B cell (primary cell): ENCODE measurements at regions of chr19 and their contacts with region 1.

Region 1: DNA sequence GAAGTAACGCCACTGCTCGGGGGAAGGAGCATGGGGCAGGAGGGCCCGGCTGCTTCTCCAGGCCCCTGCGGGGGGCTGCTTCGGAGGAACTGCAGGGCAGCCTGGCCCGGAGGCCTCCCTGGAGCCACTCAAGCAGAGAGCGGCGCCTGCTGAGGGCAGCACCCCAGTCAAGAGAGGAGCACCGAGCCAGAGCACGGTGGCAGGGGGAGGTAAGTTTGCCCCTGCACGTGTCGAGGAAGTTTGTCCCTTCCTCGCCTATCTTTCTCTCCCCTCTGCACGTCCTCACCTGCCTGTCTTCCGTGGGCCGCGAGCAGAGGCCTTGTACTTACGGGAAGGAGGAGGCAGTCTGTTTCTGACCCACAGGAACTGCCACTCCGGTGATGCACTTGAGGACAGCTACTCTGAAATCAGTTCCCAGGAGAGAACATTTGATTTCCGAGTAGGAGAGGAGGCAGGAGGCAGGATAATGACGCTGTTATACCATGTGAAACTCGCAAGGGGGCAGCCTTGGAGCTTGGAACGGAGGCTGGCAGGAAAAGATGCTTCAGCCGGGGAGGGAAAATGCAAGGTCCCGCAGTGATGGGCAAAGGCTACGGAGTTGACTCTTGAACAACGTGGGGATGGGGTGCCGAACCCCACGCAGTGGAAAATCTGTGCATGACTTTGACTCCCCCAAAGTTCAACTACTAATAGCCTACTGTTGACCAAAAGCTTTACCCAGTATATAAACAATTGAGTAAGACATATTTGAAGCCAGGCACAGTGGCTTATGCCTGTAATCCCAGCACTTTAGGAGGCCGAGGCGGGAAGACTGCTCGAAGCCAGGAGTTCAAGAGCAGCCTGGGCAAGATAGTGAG is 5.0 kb downstream of the FFAR1 start:
- DNase-seq: peak; percentile 86
- ATAC-seq: peak; percentile 66
- H3K4me3 ChIP-seq: no peak overlapping the region
- H3K4me3 Mint-ChIP-seq: no peak overlapping the region
- H3K27ac ChIP-seq: no peak overlapping the region
- H3K27ac Mint-ChIP-seq: peak overlapping the region; percentile 39
- H3K4me1 ChIP-seq: peaks cover 31 to 44% of the 10 kb centered on the region in 2 donors
- H3K4me1 Mint-ChIP-seq: peaks cover 35% of the 10 kb centered on the region
- H3K27me3 ChIP-seq: no peaks in the 10 kb centered on the region
- H3K27me3 Mint-ChIP-seq: peaks cover 9% of the 10 kb centered on the region
- CTCF ChIP-seq: peak; percentile 82

Region 2: GRCh38 chr19:35269421-35270117 is 83.1 kb before region 1 on chr19:
- CTCF ChIA-PET with region 1: interaction called, 11 read pairs
- POLR2A ChIA-PET with region 1: interaction called, 4 read pairs
- intact Hi-C with region 1: loop called (anchors 1 kb)
- DNase-seq: peak; percentile 92
- ATAC-seq: peak; percentile 71
- H3K4me3 ChIP-seq: peak overlapping the region in 4 of 5 experiments; percentile 24 to 62 (median 54)
- H3K4me3 Mint-ChIP-seq: peak overlapping the region; percentile 84
- H3K27ac ChIP-seq: no peak overlapping the region
- H3K27ac Mint-ChIP-seq: peak overlapping the region; percentile 87
- H3K4me1 ChIP-seq: peaks cover 39 to 57% of the 10 kb centered on the region in 2 donors
- H3K4me1 Mint-ChIP-seq: peaks cover 62% of the 10 kb centered on the region
- H3K27me3 ChIP-seq: no peaks in the 10 kb centered on the region
- H3K27me3 Mint-ChIP-seq: no peaks in the 10 kb centered on the region
- CTCF ChIP-seq: peak; percentile 77

Region 3: GRCh38 chr19:35306473-35307246 is 46.0 kb before region 1 on chr19:
- CTCF ChIA-PET with region 1: interaction called, 14 read pairs
- POLR2A ChIA-PET with region 1: interaction called, 4 read pairs
- intact Hi-C with region 1: loop called (anchors 2 kb)
- DNase-seq: peak; percentile 58
- ATAC-seq: peak; percentile 62
- H3K4me3 ChIP-seq: no peak overlapping the region
- H3K4me3 Mint-ChIP-seq: peak overlapping the region; percentile 29
- H3K27ac ChIP-seq: no peak overlapping the region
- H3K27ac Mint-ChIP-seq: peak overlapping the region; percentile 65
- H3K4me1 ChIP-seq: peaks cover 21 to 42% of the 10 kb centered on the region in 2 donors
- H3K4me1 Mint-ChIP-seq: peaks cover 45% of the 10 kb centered on the region
- H3K27me3 ChIP-seq: no peaks in the 10 kb centered on the region
- H3K27me3 Mint-ChIP-seq: no peaks in the 10 kb centered on the region
- CTCF ChIP-seq: peak; percentile 33

Region 4: DNA sequence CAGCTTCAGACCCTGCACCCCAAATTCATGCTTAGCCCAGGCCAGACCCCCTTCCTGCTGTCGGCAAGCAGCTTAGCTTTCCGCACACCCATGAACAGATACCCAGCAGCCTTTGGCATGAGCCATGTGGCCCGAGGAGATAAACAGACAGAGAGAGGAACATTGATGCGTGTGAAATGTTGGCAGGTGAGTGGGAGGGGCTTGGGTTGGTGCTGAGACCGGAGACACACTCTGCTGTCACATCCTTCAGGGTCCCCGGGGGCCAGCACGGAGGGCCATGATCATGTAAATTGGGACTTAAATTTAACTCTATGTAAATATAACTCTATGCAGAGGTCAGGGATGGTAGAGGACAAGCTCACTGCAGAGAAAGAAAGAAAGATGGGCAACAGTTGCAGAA is 22.2 kb before region 1 on chr19:
- CTCF ChIA-PET with region 1: interaction called, 24 read pairs
- POLR2A ChIA-PET with region 1: interaction called, 12 read pairs
- intact Hi-C with region 1: loop called (anchors 1 kb)
- DNase-seq: peak; percentile 94
- ATAC-seq: peak; percentile 84
- H3K4me3 ChIP-seq: peak overlapping the region; percentile 83 to 100 (median 89)
- H3K4me3 Mint-ChIP-seq: peak overlapping the region; percentile 93
- H3K27ac ChIP-seq: peak overlapping the region; percentile 79 to 90
- H3K27ac Mint-ChIP-seq: peak overlapping the region; percentile 96
- H3K4me1 ChIP-seq: peaks cover 68 to 83% of the 10 kb centered on the region in 2 donors
- H3K4me1 Mint-ChIP-seq: peaks cover 75% of the 10 kb centered on the region
- H3K27me3 ChIP-seq: no peaks in the 10 kb centered on the region
- H3K27me3 Mint-ChIP-seq: no peaks in the 10 kb centered on the region
- CTCF ChIP-seq: no peak

Region 5: DNA sequence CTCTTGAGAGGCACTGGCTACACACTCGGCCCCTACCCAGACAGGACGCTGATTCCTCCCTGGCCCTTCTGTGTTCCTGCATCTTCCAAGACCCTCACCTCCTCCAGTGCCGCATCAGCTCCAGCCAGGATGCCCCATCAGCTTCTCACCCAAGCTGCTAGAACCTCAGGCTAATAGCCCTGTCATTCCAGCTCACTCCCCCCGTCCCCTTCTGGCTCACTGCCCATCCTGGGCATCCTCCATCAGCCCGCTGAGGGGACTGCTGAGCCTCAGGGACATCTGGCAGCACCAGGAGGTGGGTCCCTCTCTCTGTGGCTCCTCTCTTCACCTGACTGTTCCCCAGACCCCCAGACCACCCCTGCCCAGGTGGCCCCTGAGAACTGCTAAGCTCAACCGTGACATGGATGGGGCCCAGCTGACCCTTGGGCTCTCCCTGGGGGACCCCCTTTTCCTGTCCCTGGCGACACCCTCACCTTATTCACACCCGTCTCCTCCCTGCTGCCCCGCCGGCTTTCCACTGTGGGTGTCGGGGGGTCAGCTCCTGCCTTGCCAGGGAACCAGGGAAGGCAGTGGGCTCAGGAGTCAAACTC is 10.4 kb after region 1 on chr19:
- CTCF ChIA-PET with region 1: no interaction called
- POLR2A ChIA-PET with region 1: no interaction called
- intact Hi-C with region 1: no loop called
- DNase-seq: no peak
- ATAC-seq: no peak
- H3K4me3 ChIP-seq: no peak overlapping the region
- H3K4me3 Mint-ChIP-seq: no peak overlapping the region
- H3K27ac ChIP-seq: no peak overlapping the region
- H3K27ac Mint-ChIP-seq: no peak overlapping the region
- H3K4me1 ChIP-seq: no peaks in the 10 kb centered on the region
- H3K4me1 Mint-ChIP-seq: peaks cover 1% of the 10 kb centered on the region
- H3K27me3 ChIP-seq: peaks cover 0 to 10% (median 0%) of the 10 kb centered on the region in 4 experiments
- H3K27me3 Mint-ChIP-seq: peaks cover 6% of the 10 kb centered on the region
- CTCF ChIP-seq: no peak

Region 6: DNA sequence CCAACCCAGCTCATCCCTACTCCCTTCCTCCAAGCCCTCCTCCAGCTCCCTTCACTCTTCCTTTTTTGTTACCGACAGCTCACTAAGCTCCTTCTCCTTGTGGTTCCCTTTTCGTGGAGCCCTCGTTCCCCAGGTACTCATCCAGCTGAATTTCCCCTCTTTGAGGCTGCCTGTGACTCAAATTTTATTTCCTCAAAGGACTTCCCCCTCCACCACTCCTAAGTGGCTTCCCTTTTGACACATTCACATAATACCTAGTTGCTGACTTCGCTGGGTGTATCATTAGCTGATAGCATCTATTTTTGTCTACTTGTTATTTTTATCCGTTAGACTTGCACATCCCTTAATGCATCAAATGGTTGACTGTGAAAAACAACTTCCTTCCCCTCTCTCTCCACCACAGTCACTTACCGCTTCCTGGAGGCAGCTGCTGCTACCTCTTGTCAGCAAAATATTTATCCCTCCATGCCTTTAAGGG is 109.8 kb after region 1 on chr19:
- CTCF ChIA-PET with region 1: interaction called, 234 read pairs
- POLR2A ChIA-PET with region 1: interaction called, 6 read pairs
- intact Hi-C with region 1: loop called (anchors 1 kb)
- DNase-seq: peak; percentile 88
- ATAC-seq: peak; percentile 78
- H3K4me3 ChIP-seq: peak overlapping the region in 3 of 5 experiments; percentile 1 to 24 (median 12)
- H3K4me3 Mint-ChIP-seq: peak overlapping the region; percentile 79
- H3K27ac ChIP-seq: peak overlapping the region; percentile 52 to 71
- H3K27ac Mint-ChIP-seq: peak overlapping the region; percentile 86
- H3K4me1 ChIP-seq: peaks cover 60 to 67% of the 10 kb centered on the region in 2 donors
- H3K4me1 Mint-ChIP-seq: peaks cover 62% of the 10 kb centered on the region
- H3K27me3 ChIP-seq: no peaks in the 10 kb centered on the region
- H3K27me3 Mint-ChIP-seq: no peaks in the 10 kb centered on the region
- CTCF ChIP-seq: no peak

Region 7: GRCh38 chr19:35495107-35496064 is 142.7 kb after region 1 on chr19:
- CTCF ChIA-PET with region 1: interaction called, 76 read pairs
- POLR2A ChIA-PET with region 1: interaction called, 3 read pairs
- intact Hi-C with region 1: loop called (anchors 1 kb)
- DNase-seq: peak; percentile 82
- ATAC-seq: peak; percentile 99
- H3K4me3 ChIP-seq: peak overlapping the region in 1 of 5 experiments; percentile 24
- H3K4me3 Mint-ChIP-seq: no peak overlapping the region
- H3K27ac ChIP-seq: no peak overlapping the region
- H3K27ac Mint-ChIP-seq: no peak overlapping the region
- H3K4me1 ChIP-seq: peaks cover 6 to 11% of the 10 kb centered on the region in 2 donors
- H3K4me1 Mint-ChIP-seq: peaks cover 8% of the 10 kb centered on the region
- H3K27me3 ChIP-seq: peaks cover 0 to 6% (median 2%) of the 10 kb centered on the region in 4 experiments
- H3K27me3 Mint-ChIP-seq: peaks cover 9% of the 10 kb centered on the region
- CTCF ChIP-seq: peak; percentile 100

Region 8: DNA sequence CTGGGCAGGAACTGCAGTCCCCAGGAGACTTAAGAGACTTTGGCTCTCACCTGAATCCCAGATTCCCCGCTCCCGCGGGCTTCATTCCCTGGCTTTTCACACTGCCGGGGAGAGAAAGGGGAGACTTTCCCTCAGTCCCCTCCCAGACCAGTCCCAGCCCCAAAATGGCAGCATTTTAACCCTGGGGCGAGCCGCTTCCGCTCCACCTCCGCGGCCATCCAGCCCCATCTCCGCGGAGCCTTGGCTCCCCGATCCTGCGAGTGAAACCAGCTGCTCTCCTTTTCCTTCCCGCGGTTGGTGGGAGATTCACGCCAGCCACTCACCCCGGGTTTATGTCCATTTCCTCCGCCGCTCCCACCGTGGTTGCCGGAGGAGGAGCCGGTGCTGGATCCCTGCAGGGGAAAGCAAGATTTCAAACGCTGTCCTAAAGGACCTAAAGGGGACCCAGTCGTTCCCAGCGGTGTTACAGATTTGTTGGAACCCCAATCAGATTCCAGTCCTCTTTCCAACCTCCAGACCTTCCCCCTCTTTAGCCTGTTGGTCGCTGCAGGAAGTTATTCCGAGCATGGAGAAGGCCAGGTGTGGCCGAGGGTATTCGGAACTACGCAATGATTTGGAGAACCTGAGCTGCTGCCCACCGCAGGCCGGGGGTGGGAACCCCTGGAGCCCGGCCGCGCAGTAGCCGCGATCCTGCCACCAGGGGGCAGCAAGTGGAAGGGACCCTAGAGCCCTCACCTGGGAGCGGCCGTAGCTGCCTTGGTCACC is 157.4 kb after region 1 on chr19:
- CTCF ChIA-PET with region 1: interaction called, 11 read pairs
- POLR2A ChIA-PET with region 1: no interaction called
- intact Hi-C with region 1: no loop called
- DNase-seq: peak; percentile 84
- ATAC-seq: peak; percentile 86
- H3K4me3 ChIP-seq: peak overlapping the region in 4 of 5 experiments; percentile 6 to 62 (median 37)
- H3K4me3 Mint-ChIP-seq: peak overlapping the region; percentile 76
- H3K27ac ChIP-seq: no peak overlapping the region
- H3K27ac Mint-ChIP-seq: peak overlapping the region; percentile 59
- H3K4me1 ChIP-seq: peaks cover 19 to 21% of the 10 kb centered on the region in 2 donors
- H3K4me1 Mint-ChIP-seq: peaks cover 19% of the 10 kb centered on the region
- H3K27me3 ChIP-seq: peaks cover 0 to 71% (median 11%) of the 10 kb centered on the region in 4 experiments
- H3K27me3 Mint-ChIP-seq: peaks cover 59% of the 10 kb centered on the region
- CTCF ChIP-seq: peak; percentile 96